Body of pancreas (tissue), 4 donors: ENCODE measurements at regions of chr4 and their contacts with region 1.

Region 1: DNA sequence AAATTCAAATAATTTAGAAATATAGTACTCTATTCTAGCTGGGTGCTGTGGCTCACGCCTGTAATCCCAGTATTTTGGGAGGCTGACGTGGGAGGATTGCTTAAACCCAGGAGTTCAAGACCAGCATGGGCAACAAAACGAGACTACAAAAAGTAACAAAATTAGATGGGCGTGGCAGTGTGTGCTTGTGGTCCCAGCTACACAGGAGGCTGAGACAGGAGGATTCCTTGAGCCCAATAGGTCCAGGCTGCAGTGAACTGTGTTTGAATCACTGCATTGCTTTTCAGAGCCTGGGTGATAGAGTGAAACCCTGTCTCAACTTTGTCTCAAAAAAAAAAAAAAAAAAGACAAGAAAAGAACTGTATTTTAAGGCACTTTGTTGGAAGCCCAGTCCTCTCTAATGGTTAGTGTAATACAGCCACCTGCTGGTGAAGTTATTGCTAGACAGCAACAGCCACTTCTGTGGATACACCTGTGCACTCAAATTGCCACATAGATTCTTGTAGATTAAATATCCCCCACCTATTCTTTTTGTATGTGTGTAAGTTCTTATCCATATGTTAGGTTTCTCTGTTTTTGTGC is 10.1 kb upstream of the FGG start:
- DNase-seq: peak; percentile 16 to 47 (median 26)
- ATAC-seq: no peak
- H3K4me3 ChIP-seq: no peak overlapping the region
- H3K27ac ChIP-seq: no peak overlapping the region
- H3K4me1 ChIP-seq: peaks cover 17% of the 10 kb centered on the region
- H3K27me3 ChIP-seq: no peaks in the 10 kb centered on the region
- CTCF ChIP-seq: peak in 6 of 7 experiments; percentile 29 to 73 (median 63)
- POLR2A ChIP-seq: no peak

Region 2: GRCh38 chr4:154559494-154560418 is 62.8 kb before region 1 on chr4:
- intact Hi-C with region 1: loop called (anchors 5 kb)
- DNase-seq: peak in 2 of 4 donors; percentile 7 to 28
- ATAC-seq: peak; percentile 78
- H3K4me3 ChIP-seq: no peak overlapping the region
- H3K27ac ChIP-seq: no peak overlapping the region
- H3K4me1 ChIP-seq: peaks cover 7% of the 10 kb centered on the region
- H3K27me3 ChIP-seq: no peaks in the 10 kb centered on the region
- CTCF ChIP-seq: peak; percentile 13 to 77 (median 64)
- POLR2A ChIP-seq: no peak

Region 3: GRCh38 chr4:154677923-154678322 is 55.4 kb after region 1 on chr4:
- intact Hi-C with region 1: no loop called
- DNase-seq: no peak
- ATAC-seq: no peak
- H3K4me3 ChIP-seq: no peak overlapping the region
- H3K27ac ChIP-seq: no peak overlapping the region
- H3K4me1 ChIP-seq: no peaks in the 10 kb centered on the region
- H3K27me3 ChIP-seq: no peaks in the 10 kb centered on the region
- CTCF ChIP-seq: no peak
- POLR2A ChIP-seq: no peak